Posterior vena cava (tissue), 2 donors: ENCODE measurements at regions of chr1 and their contacts with region 1.

Region 1: GRCh38 chr1:8910914-8911313 is 32.4 kb upstream of the ENO1 start:
- DNase-seq: no peak

Region 2: DNA sequence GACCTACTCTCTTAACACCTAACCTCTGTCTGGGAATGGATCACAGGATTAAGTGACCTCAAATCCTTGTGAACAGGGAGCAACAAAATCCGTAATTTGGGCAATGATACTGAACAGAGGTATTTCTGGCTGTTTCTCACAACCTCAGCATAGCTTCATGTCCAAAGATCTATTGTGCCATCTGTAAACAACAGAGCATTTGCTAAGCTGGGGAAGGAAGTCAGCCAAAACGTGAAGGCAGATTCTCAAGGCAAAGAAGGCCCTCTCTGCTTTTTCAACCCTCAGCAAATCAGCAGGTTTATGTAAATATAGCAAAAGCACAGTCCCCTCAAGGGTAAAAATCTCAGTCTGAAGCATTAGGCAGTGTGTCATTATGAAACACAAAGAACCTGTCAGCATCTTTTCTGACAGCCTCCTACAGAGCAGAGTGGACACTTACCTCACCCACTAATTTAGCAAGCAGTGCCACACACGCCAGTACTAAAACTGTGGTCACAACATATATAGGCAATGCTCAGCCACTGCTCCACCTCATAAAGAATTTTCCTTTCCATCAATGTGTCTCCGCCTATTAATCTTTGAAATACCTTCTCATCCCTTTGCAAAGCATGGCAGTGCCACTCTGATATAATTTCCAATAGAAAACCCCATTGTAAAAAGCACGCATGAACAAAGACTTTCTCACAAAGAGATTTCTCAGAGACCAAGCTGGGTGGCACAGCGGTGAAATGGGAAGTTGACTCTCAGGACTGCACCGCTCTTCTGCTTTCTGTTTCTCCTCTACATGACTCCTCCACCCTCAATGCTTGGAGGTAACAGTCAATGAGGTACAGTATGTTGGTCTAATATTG is 281.4 kb before region 1 on chr1:
- intact Hi-C with region 1: no loop called
- DNase-seq: no peak

Region 3: DNA sequence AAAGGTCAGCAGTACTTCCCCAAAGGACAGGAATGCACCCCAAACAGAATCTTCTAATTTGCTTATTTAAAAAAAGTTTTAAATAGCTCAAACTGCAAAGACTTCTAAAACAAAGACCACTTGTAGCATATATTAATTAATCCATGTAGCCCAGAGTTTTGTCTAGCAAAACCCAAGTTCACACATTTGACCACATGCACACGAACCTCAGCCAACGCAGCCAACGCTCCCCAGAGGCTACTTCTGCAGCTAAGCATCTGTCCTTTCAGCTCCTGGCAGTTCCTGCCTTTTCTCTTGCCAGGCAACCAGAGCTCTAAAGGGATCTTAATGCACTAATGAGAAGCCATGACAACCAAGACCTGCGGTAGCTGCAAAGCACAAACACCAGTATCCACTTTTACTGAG is 183.1 kb before region 1 on chr1:
- intact Hi-C with region 1: no loop called
- DNase-seq: no peak

Region 4: GRCh38 chr1:8987881-8988617 is 77.1 kb after region 1 on chr1:
- intact Hi-C with region 1: loop called in 1 of 2 experiments (anchors 5 kb)
- DNase-seq: no peak

Region 5: DNA sequence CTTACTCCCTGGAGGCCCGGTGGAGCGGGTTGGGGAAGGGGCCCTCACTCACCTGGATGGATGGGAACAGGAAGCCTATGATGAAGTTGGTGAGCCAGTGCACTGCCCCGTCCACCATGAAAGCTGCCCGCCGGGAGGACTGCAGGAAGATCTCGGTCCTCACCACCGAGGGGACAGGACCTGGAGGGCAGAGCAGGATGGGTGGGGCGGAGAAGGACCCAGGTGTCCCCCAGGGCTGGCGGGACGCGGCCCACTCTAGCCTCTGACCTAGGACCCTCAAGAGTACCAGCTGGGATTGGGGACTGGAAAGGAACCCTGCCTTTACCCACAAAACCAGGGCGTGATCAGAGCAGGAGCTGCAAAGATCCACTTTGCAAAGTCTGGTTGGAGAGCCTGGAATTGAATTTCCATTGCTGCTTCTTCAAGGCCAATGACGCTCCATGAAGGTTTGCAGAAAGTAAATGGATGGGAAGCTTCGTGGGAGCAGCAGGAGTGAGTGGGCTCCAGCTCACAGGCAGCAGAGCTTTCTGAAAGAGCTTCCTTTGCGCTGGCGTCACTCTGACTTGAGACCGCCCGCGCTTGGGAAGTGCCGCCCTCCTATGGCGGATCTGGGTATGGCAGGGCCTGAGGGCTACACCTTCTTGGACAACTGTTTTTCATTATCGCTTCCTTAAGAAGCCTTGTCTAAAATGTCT is 93.9 kb after region 1 on chr1:
- intact Hi-C with region 1: loop called in 1 of 2 experiments (anchors 5 kb)
- DNase-seq: peak; percentile 94

Region 6: DNA sequence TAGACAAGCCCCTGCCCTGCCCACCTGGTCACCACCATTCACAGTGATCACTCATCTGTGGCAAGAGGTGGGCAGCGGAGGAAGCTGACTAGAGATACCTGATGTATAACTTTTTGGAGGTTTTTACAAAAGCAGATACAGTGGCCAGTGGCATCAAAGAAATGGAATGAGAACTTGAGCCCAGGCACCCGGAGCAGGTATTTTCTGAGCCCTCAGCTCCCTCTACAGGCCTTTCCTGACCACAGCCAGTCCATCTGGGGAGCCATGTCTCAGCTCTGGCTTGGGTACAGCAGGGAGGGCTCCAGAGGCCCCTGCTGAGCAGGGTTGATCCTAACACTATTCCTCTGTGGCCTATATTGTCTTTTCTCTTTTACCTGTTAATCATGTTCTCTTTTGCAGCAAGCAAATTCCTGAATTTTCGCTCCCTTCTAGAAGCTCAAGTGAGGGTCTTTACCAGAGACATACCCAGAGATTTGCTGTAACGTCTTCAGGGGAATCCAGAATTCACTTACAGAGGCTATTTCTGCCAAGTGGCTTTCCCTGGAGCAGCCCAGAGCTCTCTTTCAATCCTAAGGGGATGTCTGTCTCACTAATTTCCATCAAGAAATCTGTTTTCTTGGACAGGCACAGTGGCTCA is 190.7 kb after region 1 on chr1:
- intact Hi-C with region 1: loop called in 1 of 2 experiments (anchors 10 kb)
- DNase-seq: no peak